Right cardiac atrium (tissue), 5 donors: ENCODE measurements at regions of chr5 and their contacts with region 1.

Region 1: DNA sequence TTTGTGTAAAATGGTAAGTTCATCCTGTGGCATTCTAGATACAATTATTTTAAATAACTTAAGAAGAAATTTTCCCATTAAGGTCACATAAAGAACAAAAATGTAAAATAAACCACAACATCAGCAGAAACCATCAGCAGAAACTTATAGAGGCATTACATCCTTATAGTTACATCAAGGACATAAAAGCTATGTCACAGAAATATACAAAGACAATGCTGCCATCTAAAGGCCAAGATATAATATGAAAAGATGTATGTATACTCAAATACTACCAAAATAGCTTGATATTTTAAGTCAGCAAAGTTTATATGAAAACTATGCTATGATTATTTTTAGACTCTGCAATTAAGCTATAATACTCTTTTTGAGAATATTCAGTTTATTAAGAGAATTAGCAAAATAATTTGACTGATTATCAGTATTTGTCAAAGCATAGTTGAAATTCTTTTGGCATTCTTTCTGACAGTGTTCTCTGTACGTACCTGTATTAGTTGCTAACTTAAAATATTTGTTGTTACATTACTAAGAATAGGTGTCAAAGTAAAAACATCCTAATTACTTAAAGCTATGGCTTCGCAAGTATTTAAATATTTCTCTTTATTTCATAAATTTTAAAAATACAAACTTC is 36.2 kb downstream of the FBXL17 start:
- DNase-seq: no peak
- ATAC-seq: no peak
- H3K4me3 ChIP-seq: no peak overlapping the region
- H3K27ac ChIP-seq: no peak overlapping the region
- H3K4me1 ChIP-seq: no peaks in the 10 kb centered on the region
- H3K27me3 ChIP-seq: no peaks in the 10 kb centered on the region

Region 2: DNA sequence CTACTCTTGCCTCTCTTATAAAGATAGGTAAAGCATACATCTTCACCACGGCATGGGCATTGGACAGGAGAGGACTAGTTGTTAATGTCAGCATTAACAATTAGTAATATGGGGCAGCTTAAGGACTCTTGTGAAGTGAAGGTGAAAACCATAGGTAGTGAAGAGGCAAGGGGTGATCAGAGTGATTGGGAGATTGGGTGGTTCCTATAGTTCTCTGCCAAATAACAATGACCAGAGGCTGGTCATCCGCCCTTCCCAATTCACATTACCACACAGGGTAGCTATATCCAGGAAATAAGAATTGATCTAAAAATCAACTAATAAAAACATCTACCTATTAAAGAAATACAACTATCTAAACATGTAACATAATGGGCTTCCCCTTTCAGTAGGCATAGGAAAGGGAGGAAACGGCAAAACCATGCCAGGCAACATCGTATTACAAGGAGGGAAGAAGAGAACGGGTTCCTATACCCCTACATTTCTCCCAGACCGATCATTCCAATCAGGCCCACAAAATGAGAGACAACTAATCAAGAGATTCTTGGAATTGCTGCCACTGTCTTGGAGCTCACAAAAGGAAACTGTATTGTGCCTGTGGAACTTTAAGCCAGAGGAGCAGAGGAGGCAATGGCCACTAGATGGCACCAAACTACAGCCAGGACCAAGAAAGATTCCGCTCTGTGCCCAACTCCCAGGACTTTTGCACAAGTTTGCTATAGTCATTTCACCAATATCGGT is 85.4 kb before region 1 on chr5:
- intact Hi-C with region 1: loop called in 2 of 4 experiments (anchors 10 kb)
- DNase-seq: peak; percentile 65 to 81 (median 71)
- ATAC-seq: peak; percentile 93 to 95
- H3K4me3 ChIP-seq: no peak overlapping the region
- H3K27ac ChIP-seq: no peak overlapping the region
- H3K4me1 ChIP-seq: no peaks in the 10 kb centered on the region
- H3K27me3 ChIP-seq: no peaks in the 10 kb centered on the region

Region 3: DNA sequence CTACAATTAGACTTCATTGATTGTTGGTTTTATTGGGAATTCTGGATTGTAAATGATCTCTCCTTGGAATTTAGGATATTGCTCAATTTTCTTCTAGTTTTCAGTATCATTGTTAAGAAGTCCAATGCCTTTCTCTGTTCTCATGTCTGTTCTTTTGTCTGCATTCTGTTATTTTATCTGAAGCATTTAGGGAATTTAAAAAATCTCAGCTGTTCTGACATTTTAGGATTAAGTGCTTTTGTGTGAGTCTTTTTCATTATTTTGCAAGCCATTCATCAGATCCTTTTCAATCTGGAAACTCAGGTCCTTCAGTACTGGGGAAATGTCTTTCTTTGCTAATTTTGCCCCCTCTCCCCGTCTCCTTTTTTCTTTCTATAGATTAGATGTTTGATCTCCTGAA is 397.7 kb after region 1 on chr5:
- intact Hi-C with region 1: no loop called
- DNase-seq: no peak
- ATAC-seq: no peak
- H3K4me3 ChIP-seq: no peak overlapping the region
- H3K27ac ChIP-seq: no peak overlapping the region
- H3K4me1 ChIP-seq: no peaks in the 10 kb centered on the region
- H3K27me3 ChIP-seq: no peaks in the 10 kb centered on the region

Region 4: GRCh38 chr5:108818613-108819272 is 473.1 kb after region 1 on chr5:
- intact Hi-C with region 1: no loop called
- DNase-seq: no peak
- ATAC-seq: no peak
- H3K4me3 ChIP-seq: no peak overlapping the region
- H3K27ac ChIP-seq: no peak overlapping the region
- H3K4me1 ChIP-seq: no peaks in the 10 kb centered on the region
- H3K27me3 ChIP-seq: no peaks in the 10 kb centered on the region